ENCODE measurements at regions of chr15 and their contacts with region 1.

Region 1: DNA sequence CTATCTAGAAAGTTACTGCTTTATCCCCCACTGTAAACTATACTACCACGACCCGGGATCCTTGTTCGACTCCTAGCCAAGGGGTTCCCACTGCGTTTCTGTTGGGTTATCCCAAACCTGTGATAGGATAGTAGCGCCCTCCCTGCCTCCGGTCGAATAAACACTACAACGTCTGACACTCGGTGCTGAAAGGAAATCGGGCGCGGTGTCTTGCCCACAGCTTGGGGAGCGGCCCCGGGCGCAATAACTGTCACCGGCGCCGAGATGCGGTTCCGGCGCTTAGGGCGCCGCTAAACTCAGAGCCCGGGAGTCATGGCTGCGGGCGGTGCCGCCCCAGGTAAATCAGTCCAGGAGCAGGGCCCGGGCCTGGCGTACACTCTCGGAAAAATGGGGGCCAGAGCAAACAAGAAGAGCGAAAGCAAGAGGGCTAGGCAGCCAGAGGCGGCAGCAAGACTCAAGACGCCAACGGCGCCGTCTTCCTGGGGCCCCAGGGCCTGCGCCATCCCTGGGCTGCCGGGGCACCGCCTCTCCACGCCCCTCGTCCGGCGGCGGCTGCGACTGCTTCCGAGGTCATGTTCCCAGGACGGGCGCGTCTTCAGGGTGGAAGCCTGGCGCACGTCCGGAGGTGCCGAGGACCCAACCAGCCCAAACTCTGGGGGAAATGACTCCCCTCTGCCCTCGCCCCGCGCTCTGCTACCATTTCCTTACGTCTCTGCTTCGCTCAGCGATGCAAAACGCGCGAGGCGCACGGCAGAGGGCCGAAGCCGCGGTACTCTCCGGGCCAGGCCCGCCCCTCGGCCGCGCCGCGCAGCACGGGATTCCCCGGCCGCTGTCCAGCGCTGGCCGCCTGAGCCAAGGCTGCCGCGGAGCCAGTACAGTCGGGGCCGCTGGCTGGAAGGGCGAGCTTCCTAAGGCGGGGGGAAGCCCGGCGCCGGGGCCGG is at the start of gene DUT:
- H3K4me3 ChIP-seq: peak within 1 kb of the TSS; percentile 90
- H3K27ac ChIP-seq: peak within 1 kb of the TSS; percentile 98
- H3K4me1 ChIP-seq: peaks cover 3% of the 10 kb centered on the region
- CTCF ChIP-seq: peak; percentile 24

Region 2: GRCh38 chr15:47917881-47918280 is 413.2 kb before region 1 on chr15:
- CTCF ChIA-PET with region 1: no interaction called
- POLR2A ChIA-PET with region 1: interaction called, 10 read pairs
- H3K4me3 ChIP-seq: no peak overlapping the region
- H3K27ac ChIP-seq: no peak overlapping the region
- H3K4me1 ChIP-seq: no peaks in the 10 kb centered on the region
- CTCF ChIP-seq: no peak

Region 3: GRCh38 chr15:48493084-48493762 is 162.1 kb after region 1 on chr15:
- CTCF ChIA-PET with region 1: no interaction called
- POLR2A ChIA-PET with region 1: no interaction called
- H3K4me3 ChIP-seq: no peak overlapping the region
- H3K27ac ChIP-seq: no peak overlapping the region
- H3K4me1 ChIP-seq: no peaks in the 10 kb centered on the region
- CTCF ChIP-seq: no peak

Region 4: GRCh38 chr15:48507416-48508065 is 176.4 kb after region 1 on chr15:
- CTCF ChIA-PET with region 1: no interaction called
- POLR2A ChIA-PET with region 1: no interaction called
- H3K4me3 ChIP-seq: no peak overlapping the region
- H3K27ac ChIP-seq: no peak overlapping the region
- H3K4me1 ChIP-seq: no peaks in the 10 kb centered on the region
- CTCF ChIP-seq: no peak

Measured in HEK293 (cell line).